ENCODE measurements at regions of chr12 and their contacts with region 1.

Region 1: DNA sequence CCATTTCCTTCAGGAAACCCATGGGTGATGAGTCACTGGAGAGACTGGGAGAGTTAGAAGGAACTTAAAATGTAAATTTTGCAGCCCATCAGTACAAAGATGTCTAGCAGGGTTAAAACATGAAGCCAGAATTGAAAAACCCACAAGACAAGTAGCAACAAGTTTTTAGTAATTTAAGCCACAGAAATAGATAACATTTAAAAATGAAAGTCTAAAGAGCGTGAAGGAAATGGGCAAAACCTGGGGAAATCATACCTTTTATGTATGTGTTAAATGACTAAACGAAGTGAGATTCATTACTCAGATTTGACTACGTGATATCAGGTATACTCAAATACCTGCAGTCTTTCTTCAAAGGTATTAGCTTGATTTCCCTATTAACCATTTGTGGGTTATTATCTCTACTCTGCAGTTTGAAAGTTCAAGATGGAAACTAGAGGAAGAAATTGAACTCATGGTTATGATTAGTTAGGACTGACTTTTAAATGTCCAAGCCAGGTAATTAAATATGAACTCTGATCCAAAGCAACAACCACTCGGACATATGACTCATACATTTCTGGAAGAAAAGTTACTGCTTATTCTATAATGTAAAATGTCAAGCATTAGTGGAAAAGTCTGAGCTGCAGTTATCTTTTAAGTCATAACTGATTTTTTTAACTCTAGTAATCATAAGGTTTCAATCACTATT is 84.1 kb downstream of the ITPR2 start:
- DNase-seq: peak; percentile 70
- ATAC-seq: peak; percentile 49; the same call in 1 of the 2 replicates
- H3K4me3 ChIP-seq: no peak overlapping the region
- H3K27ac ChIP-seq: no peak overlapping the region
- H3K4me1 ChIP-seq: peaks cover 6% of the 10 kb centered on the region
- H3K27me3 ChIP-seq: no peaks in the 10 kb centered on the region
- CTCF ChIP-seq: no peak
- POLR2A ChIP-seq: no peak
- RAD21 ChIP-seq: no peak

Region 2: GRCh38 chr12:26810330-26810729 is 61.4 kb after region 1 on chr12:
- CTCF ChIA-PET with region 1: no interaction called
- POLR2A ChIA-PET with region 1: no interaction called
- dilution Hi-C with region 1: no loop called
- in situ Hi-C with region 1: no loop called
- intact Hi-C with region 1: loop called (anchors 5 kb)
- DNase-seq: peak; percentile 87
- ATAC-seq: peak; percentile 100
- H3K4me3 ChIP-seq: peak overlapping the region; percentile 22; the same call in 1 of the 2 replicates
- H3K27ac ChIP-seq: no peak overlapping the region
- H3K4me1 ChIP-seq: peaks cover 2% of the 10 kb centered on the region; the same call in 1 of the 2 replicates
- H3K27me3 ChIP-seq: no peaks in the 10 kb centered on the region
- CTCF ChIP-seq: no peak
- POLR2A ChIP-seq: no peak
- RAD21 ChIP-seq: 0 out of 2 replicates have a peak, but pooled peaks have one; percentile 4